Sigmoid colon (tissue), 7 donors: ENCODE measurements at regions of chr7 and their contacts with region 1.

Region 1: GRCh38 chr7:79593866-79594301 is 140.4 kb upstream of the MAGI2 start:
- DNase-seq: no peak
- H3K4me3 ChIP-seq: no peak overlapping the region
- H3K27ac ChIP-seq: no peak overlapping the region
- H3K4me1 ChIP-seq: no peaks in the 10 kb centered on the region
- H3K27me3 ChIP-seq: no peaks in the 10 kb centered on the region
- CTCF ChIP-seq: no peak
- EP300 ChIP-seq: no peak
- POLR2A ChIP-seq: no peak

Region 2: DNA sequence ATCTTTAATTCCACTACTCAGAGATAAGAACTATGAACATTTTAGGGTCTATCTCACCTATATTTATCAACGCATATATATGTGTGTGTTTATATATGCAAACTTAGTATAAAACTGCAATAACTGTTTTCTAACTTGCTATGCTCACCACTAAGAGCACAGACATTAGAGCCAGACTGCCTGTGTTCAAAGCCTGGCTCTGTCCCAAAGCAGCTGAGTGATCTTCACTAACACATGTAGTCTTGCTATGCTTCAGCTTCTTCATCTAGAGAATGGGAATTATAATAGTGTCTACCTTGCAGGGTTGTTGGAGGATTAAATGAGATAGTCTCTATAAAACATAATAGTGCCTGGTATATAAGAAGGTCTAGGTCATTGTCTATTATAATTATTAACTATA is 305.9 kb before region 1 on chr7:
- intact Hi-C with region 1: loop called (anchors 5 kb)
- DNase-seq: no peak
- H3K4me3 ChIP-seq: no peak overlapping the region
- H3K27ac ChIP-seq: no peak overlapping the region
- H3K4me1 ChIP-seq: peaks cover 0 to 11% (median 4%) of the 10 kb centered on the region in 4 donors
- H3K27me3 ChIP-seq: no peaks in the 10 kb centered on the region
- CTCF ChIP-seq: no peak
- EP300 ChIP-seq: no peak
- POLR2A ChIP-seq: no peak